ENCODE measurements at regions of chr15 and their contacts with region 1.

Region 1: DNA sequence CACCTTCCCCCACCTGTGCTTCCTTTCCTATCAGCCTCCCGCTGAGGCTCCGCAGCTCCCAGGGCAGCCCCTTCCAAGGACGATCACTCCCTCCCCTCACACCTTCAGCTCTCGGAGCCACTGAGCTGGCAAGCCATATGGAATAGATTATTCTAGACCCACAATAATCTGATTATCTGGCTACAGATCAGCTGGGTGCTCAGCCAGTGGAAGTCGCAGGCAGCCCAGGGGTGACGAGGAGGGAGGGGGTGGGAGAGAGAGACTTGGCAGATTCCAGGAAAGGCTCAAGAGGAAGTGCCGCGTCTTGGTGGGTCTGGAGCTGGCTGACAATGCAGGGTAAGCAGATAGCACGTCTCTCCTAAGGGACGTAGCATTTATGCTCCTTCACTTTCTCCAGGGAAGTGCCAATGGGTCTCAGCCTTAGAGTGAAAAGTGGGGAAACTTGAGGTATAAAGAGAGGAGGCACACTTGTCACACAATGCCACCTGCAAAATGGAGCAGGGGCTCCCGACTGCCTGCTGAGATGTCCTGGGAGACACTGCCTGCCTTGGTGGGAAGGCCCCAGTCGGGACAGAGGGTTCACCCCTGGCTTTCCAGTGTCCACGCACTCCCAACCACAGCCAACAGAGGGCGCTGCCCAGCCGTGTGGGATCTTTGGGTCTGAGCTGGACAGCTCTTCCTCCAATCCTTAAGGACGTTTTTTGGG is 9.4 kb upstream of the MESP1 start:
- DNase-seq: peak; percentile 79 to 86
- ATAC-seq: peak; percentile 79 to 93 (median 88)
- H3K4me3 ChIP-seq: no peak overlapping the region
- H3K27ac ChIP-seq: no peak overlapping the region
- H3K4me1 ChIP-seq: peaks cover 0 to 11% (median 0%) of the 10 kb centered on the region in 9 donors
- H3K27me3 ChIP-seq: no peaks in the 10 kb centered on the region
- CTCF ChIP-seq: peak; percentile 84 to 98 (median 95)

Region 2: DNA sequence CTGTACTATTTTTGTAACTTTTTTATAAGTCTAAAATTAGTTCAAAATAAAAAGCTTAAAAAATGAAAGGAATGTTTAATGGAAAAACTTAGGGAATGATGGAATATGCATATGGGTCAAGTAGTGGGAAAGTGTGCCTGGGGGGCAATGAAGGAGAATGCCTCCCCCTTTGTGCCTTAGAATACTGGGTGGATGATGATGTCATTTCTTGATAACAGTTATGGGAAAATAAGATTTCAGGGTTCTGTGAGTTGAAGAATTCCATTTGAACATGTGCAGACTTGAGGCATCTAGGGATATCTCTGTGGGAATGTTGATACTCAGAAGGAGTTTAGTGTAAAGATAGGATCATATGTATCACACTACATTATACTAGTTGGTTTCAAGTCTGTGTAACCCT is 56.0 kb before region 1 on chr15:
- intact Hi-C with region 1: loop called in 1 of 10 experiments (anchors 10 kb)
- DNase-seq: no peak
- ATAC-seq: peak in 2 of 8 donors; percentile 31 to 69
- H3K4me3 ChIP-seq: no peak overlapping the region
- H3K27ac ChIP-seq: no peak overlapping the region
- H3K4me1 ChIP-seq: no peaks in the 10 kb centered on the region
- H3K27me3 ChIP-seq: peaks cover 0 to 25% (median 4%) of the 10 kb centered on the region in 7 donors
- CTCF ChIP-seq: no peak

Region 3: GRCh38 chr15:89814112-89814742 is 53.8 kb after region 1 on chr15:
- intact Hi-C with region 1: no loop called
- DNase-seq: peak in 1 of 2 donors; percentile 32
- ATAC-seq: peak in 4 of 8 donors; percentile 10 to 35 (median 26)
- H3K4me3 ChIP-seq: peak overlapping the region; percentile 28 to 72 (median 56)
- H3K27ac ChIP-seq: peak overlapping the region in 5 of 10 donors; percentile 10 to 95 (median 36)
- H3K4me1 ChIP-seq: peaks cover 0 to 34% (median 20%) of the 10 kb centered on the region in 9 donors
- H3K27me3 ChIP-seq: peaks cover 3 to 48% (median 44%) of the 10 kb centered on the region in 7 donors
- CTCF ChIP-seq: no peak

Region 4: DNA sequence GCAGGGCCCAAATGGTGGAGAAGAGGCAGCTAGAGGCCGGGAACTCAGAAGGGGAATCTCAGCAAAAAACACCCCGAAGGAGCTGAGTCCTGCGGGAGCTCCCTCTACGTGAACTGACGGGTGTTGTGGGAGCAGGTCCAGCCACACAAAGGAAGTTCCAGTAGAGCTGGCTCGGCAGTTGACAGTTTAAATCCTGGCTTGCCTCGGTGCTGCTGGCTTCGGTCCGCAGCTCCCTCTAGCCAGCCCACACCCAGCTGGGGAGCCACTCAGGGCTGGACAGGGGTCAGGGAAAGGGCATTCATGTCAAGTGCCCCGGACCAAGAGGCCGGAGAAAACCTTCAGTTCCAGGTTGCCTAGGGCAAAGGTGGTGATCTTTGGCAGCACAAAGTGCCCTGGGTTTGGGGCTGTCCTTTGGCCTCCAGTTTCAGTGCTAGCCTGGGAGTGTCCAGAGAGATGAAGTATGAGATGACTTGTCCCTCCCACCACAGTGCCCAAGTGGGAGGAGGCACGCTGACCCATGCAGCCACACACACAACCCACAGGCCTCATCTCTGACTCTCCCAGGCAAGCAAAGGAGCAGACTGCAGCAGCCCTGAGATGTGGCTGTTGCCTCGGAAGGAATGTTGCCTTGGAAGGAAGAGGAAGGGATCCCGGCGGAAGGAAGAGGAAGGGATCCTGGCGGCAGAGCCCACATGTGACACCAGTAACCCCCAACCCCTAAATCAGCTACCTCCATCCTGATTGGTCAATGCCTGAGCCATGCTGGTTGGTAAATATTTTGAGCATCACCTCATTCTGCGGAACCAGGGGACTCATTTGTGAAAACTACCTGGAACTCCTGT is 68.0 kb after region 1 on chr15:
- intact Hi-C with region 1: loop called in 2 of 10 experiments (anchors 5 to 10 kb)
- DNase-seq: peak; percentile 51 to 73
- ATAC-seq: peak; percentile 74 to 82 (median 78)
- H3K4me3 ChIP-seq: peak overlapping the region in 1 of 10 donors; percentile 18
- H3K27ac ChIP-seq: peak overlapping the region in 7 of 10 donors; percentile 11 to 72 (median 41)
- H3K4me1 ChIP-seq: peaks cover 7 to 60% (median 17%) of the 10 kb centered on the region in 9 donors
- H3K27me3 ChIP-seq: no peaks in the 10 kb centered on the region
- CTCF ChIP-seq: peak in 2 of 9 donors; percentile 14 to 20

Region 5: GRCh38 chr15:89836255-89837133 is 76.0 kb after region 1 on chr15:
- intact Hi-C with region 1: loop called in 1 of 10 experiments (anchors 10 kb)
- DNase-seq: no peak
- ATAC-seq: peak; percentile 43 to 72 (median 58)
- H3K4me3 ChIP-seq: no peak overlapping the region
- H3K27ac ChIP-seq: peak overlapping the region in 7 of 10 donors; percentile 7 to 83 (median 54)
- H3K4me1 ChIP-seq: peaks cover 0 to 65% (median 12%) of the 10 kb centered on the region in 9 donors
- H3K27me3 ChIP-seq: no peaks in the 10 kb centered on the region
- CTCF ChIP-seq: no peak

Region 6: DNA sequence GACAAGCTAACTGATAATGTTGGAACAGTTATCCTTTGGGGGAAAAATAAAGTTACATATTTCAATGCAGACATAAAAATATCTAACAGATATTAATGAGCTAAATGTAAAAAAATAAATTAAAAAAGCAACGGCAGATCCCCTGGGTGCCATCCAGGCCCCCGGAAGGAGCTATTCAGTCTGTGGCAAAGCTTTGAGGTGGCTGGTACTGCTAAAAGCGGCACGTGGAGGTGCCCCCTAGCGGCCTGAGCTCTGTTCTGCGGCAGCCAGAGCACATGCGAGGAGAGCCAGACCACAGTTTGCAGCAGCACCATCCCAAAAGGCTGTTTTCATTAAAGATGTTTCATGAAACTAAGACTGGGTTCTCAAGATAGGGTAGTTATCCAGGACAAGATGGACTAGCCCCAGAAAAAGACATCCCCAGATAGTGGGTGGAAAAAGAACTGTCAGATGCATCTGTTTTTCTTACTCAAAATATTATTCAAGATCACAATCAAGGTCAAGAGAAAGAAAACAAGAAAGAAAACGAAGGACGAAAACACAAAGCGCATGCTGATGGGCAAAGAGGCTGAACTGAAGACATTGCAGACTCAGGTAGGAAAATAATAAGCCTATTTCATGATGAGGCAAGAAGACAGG is 114.6 kb after region 1 on chr15:
- intact Hi-C with region 1: loop called (anchors 1 to 5 kb)
- DNase-seq: peak; percentile 75 to 84
- ATAC-seq: peak; percentile 82 to 94 (median 92)
- H3K4me3 ChIP-seq: no peak overlapping the region
- H3K27ac ChIP-seq: peak overlapping the region in 1 of 10 donors; percentile 72
- H3K4me1 ChIP-seq: peaks cover 0 to 34% (median 5%) of the 10 kb centered on the region in 9 donors
- H3K27me3 ChIP-seq: no peaks in the 10 kb centered on the region
- CTCF ChIP-seq: peak; percentile 82 to 98 (median 94)

Region 7: DNA sequence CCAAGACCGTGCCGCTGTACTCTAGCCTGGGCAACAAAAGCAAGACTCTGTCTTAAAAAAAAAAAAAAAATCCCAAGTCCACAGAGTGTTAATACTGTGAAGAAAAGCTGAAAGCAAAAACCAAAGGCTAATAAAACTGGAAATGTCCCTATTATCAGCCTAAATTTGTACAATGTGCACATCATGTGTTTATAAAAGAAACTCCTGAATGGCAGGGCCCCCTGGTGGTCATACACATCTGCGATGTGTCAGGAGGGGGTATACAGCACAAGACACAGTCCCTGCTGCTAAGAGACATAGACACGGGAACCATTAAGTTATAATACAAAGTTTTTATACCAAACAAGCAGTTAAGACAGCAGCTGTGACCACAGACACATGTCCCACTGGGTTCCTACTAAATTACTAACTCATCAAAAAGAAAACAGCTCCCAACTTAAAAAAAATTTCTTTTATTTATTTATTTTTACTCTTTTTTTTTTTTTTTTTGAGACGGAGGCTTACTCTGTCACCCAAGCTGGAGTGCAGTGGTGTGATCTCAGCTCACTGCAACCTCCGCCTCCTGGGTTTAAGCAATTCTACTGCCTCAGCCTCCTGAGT is 310.9 kb after region 1 on chr15:
- intact Hi-C with region 1: loop called in 4 of 10 experiments (anchors 10 kb)
- DNase-seq: peak; percentile 75 to 90
- ATAC-seq: peak in 7 of 8 donors; percentile 59 to 86 (median 83)
- H3K4me3 ChIP-seq: no peak overlapping the region
- H3K27ac ChIP-seq: peak overlapping the region in 3 of 10 donors; percentile 30 to 62 (median 32)
- H3K4me1 ChIP-seq: peaks cover 0 to 29% (median 8%) of the 10 kb centered on the region in 9 donors
- H3K27me3 ChIP-seq: no peaks in the 10 kb centered on the region
- CTCF ChIP-seq: peak; percentile 74 to 93 (median 85)

Region 8: DNA sequence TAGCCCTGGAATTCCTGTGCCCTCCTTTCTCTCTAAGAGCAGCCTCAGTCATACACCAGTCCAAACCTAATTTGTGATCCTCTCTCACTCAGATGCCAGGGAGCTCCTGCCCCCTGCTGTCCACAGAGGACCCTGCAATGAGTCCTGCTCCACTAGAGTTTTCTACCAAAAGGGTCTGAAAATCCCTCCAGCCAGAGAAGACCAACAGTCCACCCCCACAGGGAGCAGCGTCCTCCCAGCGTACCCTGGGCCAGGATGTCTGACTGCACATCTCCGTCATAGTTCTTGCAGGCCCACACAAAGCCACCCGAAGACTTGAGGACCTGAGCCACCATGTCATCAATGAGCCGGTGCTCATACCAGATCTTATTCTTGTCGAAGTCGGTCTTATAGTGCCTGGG is 326.4 kb after region 1 on chr15:
- intact Hi-C with region 1: loop called in 4 of 10 experiments (anchors 10 kb)
- DNase-seq: no peak
- ATAC-seq: peak in 1 of 8 donors; percentile 14
- H3K4me3 ChIP-seq: no peak overlapping the region
- H3K27ac ChIP-seq: no peak overlapping the region
- H3K4me1 ChIP-seq: peaks cover 0 to 19% (median 0%) of the 10 kb centered on the region in 9 donors
- H3K27me3 ChIP-seq: no peaks in the 10 kb centered on the region
- CTCF ChIP-seq: peak in 8 of 9 donors; percentile 29 to 76 (median 60)

Measured in heart right ventricle (tissue), 16 donors.